RWPE1 (cell line): ENCODE measurements at regions of chr13 and their contacts with region 1.

Region 1: DNA sequence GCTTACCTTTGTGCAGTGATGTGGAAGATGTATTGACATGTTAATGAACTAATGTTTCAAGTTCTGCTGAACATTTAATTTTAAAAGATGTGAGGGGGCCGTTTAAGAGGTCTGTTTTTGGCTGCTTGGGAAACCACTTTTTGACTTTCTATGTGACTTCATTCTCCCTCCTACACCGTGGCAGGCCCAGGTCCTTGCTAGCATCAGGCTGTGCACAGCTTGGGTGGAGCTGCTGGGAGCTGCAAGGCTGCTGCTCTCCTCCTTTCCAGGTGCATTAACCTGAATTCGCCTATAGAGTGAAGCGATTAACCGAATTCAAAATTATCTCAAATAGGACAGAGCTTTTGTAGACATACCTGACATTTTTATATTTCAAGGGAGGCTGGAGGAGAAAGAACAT is 249.1 kb downstream of the FGF14 start:
- DNase-seq: no peak
- H3K27ac ChIP-seq: no peak overlapping the region
- CTCF ChIP-seq: no peak

Region 2: DNA sequence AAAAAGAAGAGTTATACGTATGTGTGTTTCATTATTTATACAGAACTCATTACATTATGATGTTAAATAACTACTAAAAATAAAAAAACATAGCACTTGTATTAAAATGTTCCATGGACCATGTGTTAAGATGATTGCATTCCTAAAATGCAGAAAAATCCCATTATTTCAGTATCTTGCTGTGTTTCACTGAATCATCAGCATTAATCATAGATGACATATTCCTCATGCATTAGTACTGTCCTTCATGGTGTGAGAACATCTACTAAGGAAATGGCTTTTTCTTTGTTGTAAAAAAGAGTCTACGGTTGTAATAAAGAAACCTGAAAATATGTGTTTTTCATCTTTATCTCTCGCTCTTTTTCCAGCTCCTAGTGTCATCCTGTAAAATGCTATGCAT is 167.5 kb before region 1 on chr13:
- CTCF ChIA-PET with region 1: no interaction called
- POLR2A ChIA-PET with region 1: no interaction called
- DNase-seq: peak; percentile 10
- H3K27ac ChIP-seq: no peak overlapping the region
- CTCF ChIP-seq: no peak

Region 3: DNA sequence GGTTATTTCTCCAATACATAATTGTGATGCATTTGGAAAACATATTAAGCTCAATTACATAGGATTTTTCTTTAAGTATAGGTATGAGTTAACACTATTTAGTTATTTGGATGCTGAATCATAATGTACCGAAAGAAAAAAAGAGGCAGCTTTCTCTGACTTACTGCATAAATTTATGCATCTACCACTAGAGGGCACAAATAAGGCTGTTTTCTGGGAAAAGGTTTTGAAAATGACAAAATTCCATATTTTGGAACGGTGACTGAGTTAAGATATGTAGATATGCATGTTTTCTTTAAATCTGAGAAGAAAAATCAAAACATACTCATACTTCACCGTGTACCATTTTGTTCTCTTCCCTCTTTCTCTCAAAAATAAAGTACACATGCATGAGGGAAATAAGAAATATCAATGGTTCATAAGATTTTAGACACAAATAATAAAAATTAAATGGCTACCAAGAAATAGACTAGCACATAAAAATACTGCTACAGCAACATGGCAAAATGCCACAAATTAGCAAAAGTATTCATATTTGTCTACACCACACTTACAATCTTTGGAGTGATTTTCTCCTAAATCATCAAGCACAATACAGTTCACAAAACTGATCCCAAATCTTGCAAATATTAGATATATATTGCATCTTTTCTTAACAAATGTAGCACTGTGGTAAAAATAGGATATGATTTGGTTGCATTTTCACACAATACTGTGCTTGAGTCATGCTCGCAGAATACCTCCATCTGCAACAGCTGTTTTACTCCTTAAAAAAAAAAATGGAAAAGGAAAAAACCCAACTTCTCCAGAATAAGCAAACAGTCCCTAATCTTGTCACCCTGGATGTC is 10.9 kb before region 1 on chr13:
- CTCF ChIA-PET with region 1: interaction called, 12 read pairs
- POLR2A ChIA-PET with region 1: no interaction called
- DNase-seq: peak; percentile 22
- H3K27ac ChIP-seq: no peak overlapping the region
- CTCF ChIP-seq: peak; percentile 82